ENCODE measurements at regions of chr17 and their contacts with region 1.

Region 1: DNA sequence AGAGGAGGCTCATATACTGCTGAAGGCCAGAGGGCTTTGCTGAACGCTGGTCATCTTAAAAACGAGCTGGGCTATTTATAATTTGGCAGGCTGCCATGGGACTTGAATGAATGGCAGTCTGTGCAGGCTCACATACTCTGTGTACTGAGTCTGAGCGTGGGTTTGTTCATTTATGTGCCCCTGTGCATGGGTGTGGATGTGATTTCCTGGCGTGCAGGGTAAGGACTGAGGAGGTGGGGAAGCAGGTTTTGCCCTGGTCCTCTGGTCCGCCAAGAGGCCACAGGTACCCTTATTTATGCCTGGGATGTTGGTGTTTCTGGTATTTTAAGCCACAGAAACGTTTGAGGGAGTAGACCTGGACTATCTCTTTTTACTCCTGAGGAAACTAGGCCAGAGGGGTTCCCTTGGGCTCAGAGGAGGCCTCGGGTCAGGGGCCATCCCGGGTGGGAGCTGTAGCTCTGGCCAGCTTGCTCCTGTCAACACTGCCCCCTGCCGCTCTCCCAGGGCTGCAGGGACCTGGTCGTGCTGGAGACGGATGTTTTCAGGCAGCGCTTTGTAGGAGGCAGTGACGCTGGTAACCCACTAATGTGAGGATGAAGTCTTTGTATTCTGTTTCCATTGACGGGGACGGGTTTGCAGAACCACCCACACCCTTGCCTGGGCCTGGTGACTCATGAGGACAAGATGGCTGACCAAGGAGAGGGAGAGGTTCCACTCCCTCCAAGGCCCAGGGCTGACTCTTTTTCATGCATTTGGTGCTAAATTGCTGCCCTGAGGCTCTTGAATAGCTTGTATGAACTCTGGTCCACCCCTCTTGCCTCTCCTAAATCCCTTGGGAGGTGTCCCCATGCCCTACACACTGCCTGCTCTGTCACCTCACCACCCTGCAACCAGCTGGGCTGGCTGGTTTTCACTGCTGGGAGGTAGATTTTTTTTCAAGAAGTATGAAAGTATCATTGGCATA is 184.5 kb downstream of the MSI2 start:
- DNase-seq: peak; percentile 59
- H3K4me3 ChIP-seq: no peak overlapping the region
- H3K27ac ChIP-seq: no peak overlapping the region
- H3K4me1 ChIP-seq: peaks cover 8% of the 10 kb centered on the region
- H3K27me3 ChIP-seq: no peaks in the 10 kb centered on the region
- CTCF ChIP-seq: no peak

Region 2: DNA sequence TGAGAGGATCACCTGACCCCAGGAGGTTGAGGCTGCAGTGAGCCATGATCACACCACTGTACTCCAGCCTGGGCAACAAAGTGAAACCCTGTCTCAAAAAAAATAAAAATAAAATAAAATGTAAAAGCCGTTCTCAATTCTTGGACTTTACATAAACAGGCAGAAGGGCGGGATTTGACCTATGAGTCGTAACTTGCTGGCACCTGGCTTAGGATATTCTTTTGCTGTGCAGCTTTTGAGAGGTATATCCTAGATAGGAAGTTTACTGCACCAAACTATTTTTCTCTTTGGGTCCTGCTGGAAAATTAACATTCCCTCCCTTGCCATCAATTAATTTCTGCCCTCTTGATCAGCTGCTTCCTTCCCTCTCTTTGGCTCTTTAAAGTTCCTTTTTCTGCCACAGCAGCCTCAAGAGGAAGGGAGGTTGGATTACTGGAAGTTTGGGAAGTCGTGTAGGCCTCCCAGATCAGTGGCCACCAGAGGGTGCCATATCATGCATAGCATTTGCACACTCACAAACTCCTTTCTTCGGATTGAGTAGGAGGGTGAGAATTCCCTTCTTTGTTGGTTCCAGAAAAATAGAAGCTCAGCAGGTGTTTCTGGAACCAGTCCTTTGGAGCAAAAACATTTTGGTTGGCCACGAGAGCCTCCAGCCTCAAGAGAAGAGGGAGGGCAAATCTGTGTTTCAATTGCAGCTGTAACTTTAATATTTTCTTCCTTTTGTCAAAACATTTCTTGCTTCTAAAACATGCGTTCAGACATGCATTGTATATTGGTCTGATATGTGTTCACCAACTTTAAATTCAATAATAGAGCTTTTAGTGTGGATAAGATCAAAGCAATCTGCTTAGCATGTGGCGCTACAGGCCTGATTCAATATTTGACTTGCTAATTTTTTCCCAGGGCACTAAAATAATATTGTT is 157.0 kb after region 1 on chr17:
- intact Hi-C with region 1: loop called (anchors 10 kb)
- DNase-seq: peak; percentile 72
- H3K4me3 ChIP-seq: no peak overlapping the region
- H3K27ac ChIP-seq: no peak overlapping the region
- H3K4me1 ChIP-seq: no peaks in the 10 kb centered on the region
- H3K27me3 ChIP-seq: no peaks in the 10 kb centered on the region
- CTCF ChIP-seq: peak; percentile 77